Activated CD4-positive, alpha-beta T cell treated with anti-CD3 and anti-CD28 coated beads for 36 hours (primary cell): ENCODE measurements at regions of chr2 and their contacts with region 1.

Region 1: DNA sequence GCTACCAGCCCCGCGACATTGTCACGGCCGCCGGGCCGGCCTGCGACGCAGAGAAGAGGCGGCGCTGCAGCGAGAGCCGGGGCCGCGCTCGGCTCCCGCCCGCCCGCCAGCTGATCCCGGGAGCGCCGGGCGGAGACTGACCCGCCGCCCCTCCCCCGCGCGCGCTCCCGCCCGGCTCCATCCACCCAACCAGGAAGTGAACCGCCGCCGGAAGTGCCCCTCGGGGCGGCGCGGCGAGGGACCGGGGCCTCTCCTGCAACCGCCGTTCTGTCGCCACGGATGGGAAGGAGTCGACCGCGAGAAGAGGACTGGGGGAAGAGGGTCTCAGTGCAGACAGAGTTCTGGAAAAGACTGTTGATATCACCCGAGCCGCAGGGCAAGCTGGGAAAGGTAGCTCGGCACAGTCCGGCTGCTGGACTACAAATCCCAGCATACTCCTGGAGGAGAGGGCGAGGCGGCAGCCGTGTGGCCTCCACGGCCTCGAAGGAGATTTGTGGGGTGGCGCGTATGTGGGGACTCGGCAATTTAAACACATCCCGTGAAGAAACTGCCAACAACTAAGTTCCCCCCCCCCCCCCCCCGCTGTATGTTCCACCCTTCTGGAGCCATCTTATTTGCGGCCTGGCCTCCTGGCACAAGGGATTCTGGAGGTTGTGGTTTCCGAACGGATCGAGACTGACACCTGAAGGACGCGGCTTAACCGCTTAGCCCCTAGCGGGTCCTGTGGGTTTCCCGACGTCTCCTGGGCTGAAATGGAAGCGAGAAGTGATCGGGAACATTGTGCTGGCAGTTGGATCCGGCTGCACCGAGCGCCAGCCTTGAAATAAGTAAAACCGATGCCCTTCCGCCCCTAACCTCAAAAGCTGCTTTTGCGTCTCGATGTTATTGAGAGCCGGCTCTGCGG is at the start of gene AAK1:
- DNase-seq: peak; percentile 94
- ATAC-seq: peak; percentile 60
- H3K4me3 Mint-ChIP-seq: peak within 1 kb of the TSS; percentile 82
- H3K27ac Mint-ChIP-seq: peak within 1 kb of the TSS; percentile 99
- H3K4me1 Mint-ChIP-seq: peaks cover 50% of the 10 kb centered on the region
- H3K27me3 Mint-ChIP-seq: no peaks in the 10 kb centered on the region
- total RNA-seq, gene AAK1: 95.9 to 104 TPM

Region 2: GRCh38 chr2:69386789-69387734 is 256.8 kb before region 1 on chr2 and contains the start of gene GFPT1:
- CTCF ChIA-PET with region 1: no interaction called
- POLR2A ChIA-PET with region 1: no interaction called
- intact Hi-C with region 1: loop called in 1 of 2 experiments (anchors 2 kb)
- DNase-seq: peak; percentile 96
- ATAC-seq: peak; percentile 96
- H3K4me3 Mint-ChIP-seq: peak within 1 kb of the TSS; percentile 81
- H3K27ac Mint-ChIP-seq: peak within 1 kb of the TSS; percentile 92
- H3K4me1 Mint-ChIP-seq: peaks cover 45% of the 10 kb centered on the region
- H3K27me3 Mint-ChIP-seq: no peaks in the 10 kb centered on the region
- total RNA-seq, gene GFPT1: 31.0 to 36.1 TPM

Region 3: GRCh38 chr2:69589973-69590652 is 53.7 kb before region 1 on chr2:
- CTCF ChIA-PET with region 1: interaction called, 10 read pairs
- POLR2A ChIA-PET with region 1: interaction called, 6 read pairs
- intact Hi-C with region 1: no loop called
- DNase-seq: no peak
- ATAC-seq: peak; percentile 50
- H3K4me3 Mint-ChIP-seq: no peak overlapping the region
- H3K27ac Mint-ChIP-seq: peak overlapping the region; percentile 76
- H3K4me1 Mint-ChIP-seq: peaks cover 71% of the 10 kb centered on the region
- H3K27me3 Mint-ChIP-seq: no peaks in the 10 kb centered on the region

Region 4: DNA sequence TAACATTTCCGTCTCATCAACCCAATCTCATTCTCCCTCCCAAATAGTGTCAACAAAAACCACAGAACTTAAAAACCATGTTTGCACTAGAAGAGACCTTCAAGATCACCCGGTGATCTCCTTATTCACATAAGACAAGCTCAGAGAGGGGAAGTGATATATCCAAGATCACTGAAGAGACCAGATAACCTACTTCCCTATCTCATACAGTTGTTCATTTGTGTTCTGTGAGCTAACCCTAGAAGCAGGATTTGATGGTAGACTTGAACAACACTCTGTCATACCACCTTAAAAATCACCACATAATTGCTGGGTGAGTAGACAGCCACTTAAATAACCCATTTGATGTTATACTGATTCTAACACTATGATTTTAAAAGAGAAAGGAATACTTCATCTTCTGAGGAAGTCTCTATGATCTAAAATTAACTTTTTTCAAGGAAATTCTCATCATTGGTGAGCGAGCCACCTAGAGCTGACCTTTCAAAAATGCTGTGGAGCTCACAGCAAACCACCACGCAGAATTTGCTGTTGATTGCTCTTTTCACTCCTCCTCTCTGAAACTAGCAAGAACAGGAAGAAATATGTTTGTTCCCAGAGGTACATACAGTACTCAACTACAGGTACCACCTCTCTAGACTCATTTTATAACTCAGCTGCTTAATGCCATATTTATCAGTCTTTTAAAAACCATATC is 15.4 kb before region 1 on chr2:
- CTCF ChIA-PET with region 1: interaction called, 15 read pairs
- POLR2A ChIA-PET with region 1: interaction called, 12 read pairs
- intact Hi-C with region 1: loop called (anchors 1 to 2 kb)
- DNase-seq: peak; percentile 43
- ATAC-seq: peak; percentile 83
- H3K4me3 Mint-ChIP-seq: no peak overlapping the region
- H3K27ac Mint-ChIP-seq: no peak overlapping the region
- H3K4me1 Mint-ChIP-seq: peaks cover 32% of the 10 kb centered on the region
- H3K27me3 Mint-ChIP-seq: no peaks in the 10 kb centered on the region

Region 5: DNA sequence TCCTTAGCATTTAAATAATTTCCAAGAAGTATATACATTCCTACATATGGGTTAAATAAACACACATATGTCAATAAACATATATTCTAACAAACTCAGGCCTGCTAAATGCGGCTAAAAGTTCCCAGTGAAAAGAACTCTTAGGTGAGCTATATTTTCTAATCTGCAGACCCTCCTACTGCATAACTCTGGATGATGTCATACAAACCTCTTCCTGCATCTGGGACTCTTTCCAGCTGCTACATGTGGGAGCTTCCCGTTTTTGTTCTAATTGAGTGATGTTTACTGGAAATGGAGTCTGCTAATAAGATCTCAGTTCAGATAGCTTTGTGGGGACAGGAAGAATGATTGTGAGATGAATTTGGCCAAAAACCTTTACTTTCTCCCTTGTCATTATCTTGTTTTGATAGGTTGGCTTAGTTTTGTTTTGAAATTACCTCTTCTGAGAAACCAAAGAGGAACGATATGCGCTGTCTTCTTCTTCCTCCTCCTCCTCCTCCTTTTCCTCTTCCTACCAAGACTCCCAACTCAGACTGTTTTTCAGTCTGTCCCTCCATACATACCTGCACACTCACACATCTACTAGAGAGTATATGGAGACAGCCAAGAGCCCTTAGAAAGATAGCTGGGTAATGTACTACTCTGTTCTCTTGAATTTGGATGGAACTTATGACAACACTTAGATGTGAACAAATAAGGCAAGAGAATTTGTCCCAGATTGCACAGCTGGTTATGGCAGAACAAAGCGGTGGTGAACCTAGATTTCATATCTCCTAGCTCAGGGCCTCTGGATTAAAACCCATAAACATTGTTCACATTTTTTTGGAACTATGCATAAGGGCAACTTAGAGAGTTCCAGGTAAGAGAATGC is 39.5 kb after region 1 on chr2:
- CTCF ChIA-PET with region 1: interaction called, 3 read pairs
- POLR2A ChIA-PET with region 1: interaction called, 4 read pairs
- intact Hi-C with region 1: loop called (anchors 2 kb)
- DNase-seq: no peak
- ATAC-seq: peak; percentile 67
- H3K4me3 Mint-ChIP-seq: peak overlapping the region; percentile 63
- H3K27ac Mint-ChIP-seq: peak overlapping the region; percentile 87
- H3K4me1 Mint-ChIP-seq: peaks cover 60% of the 10 kb centered on the region
- H3K27me3 Mint-ChIP-seq: no peaks in the 10 kb centered on the region

Region 6: GRCh38 chr2:69829256-69830046 is 185.6 kb after region 1 on chr2 and contains the start of gene GMCL1:
- CTCF ChIA-PET with region 1: no interaction called
- POLR2A ChIA-PET with region 1: no interaction called
- intact Hi-C with region 1: loop called in 1 of 2 experiments (anchors 1 kb)
- DNase-seq: peak; percentile 99
- ATAC-seq: peak; percentile 96
- H3K4me3 Mint-ChIP-seq: peak within 1 kb of the TSS; percentile 83
- H3K27ac Mint-ChIP-seq: peak within 1 kb of the TSS; percentile 94
- H3K4me1 Mint-ChIP-seq: peaks cover 49% of the 10 kb centered on the region
- H3K27me3 Mint-ChIP-seq: no peaks in the 10 kb centered on the region
- total RNA-seq, gene GMCL1: 14.5 to 20.3 TPM

Region 7: GRCh38 chr2:70142590-70143313 is 498.9 kb after region 1 on chr2:
- CTCF ChIA-PET with region 1: no interaction called
- POLR2A ChIA-PET with region 1: no interaction called
- intact Hi-C with region 1: loop called in 1 of 2 experiments (anchors 2 kb)
- DNase-seq: peak; percentile 100
- ATAC-seq: peak; percentile 57
- H3K4me3 Mint-ChIP-seq: peak overlapping the region; percentile 78
- H3K27ac Mint-ChIP-seq: peak overlapping the region; percentile 100
- H3K4me1 Mint-ChIP-seq: peaks cover 66% of the 10 kb centered on the region
- H3K27me3 Mint-ChIP-seq: no peaks in the 10 kb centered on the region